ENCODE measurements at regions of chr4 and their contacts with region 1.

Region 1: DNA sequence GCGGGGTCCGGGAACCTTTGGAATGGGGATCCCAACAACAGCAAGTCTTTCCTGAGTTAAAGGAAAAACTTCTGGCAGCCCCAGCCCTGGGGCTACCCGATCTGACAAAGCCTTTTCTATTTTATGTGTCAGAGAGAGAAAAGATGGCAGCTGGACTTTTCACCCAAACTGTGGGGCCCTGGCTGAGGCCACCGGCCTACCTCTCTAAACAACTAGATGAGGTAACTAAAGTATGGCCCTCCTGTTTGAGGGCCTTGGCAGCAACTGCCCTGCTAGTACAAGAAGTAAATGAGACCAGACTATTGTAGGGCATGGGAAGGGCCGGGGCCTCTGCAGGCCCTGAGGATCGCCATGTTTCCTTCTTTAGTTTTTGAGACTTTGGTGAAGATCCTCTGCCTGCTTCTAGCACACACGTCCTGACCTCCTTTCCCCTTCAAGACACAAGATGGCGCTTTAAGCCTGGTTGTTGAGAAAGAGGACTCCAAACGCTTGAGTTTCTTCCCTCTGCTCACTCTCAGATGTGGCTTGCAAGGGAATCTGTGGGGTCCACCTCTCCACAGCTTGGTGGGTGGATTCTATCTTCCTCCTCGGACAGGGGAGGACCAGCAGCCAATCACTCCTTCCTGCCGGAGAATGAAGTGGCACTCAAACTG is 18.5 kb upstream of the DRD5 start:
- DNase-seq: peak; percentile 59
- H3K4me3 ChIP-seq: no peak overlapping the region
- H3K27ac ChIP-seq: no peak overlapping the region
- H3K4me1 ChIP-seq: no peaks in the 10 kb centered on the region
- H3K27me3 ChIP-seq: no peaks in the 10 kb centered on the region
- CTCF ChIP-seq: peak; percentile 14; the same call in 1 of the 2 replicates
- EP300 ChIP-seq: no peak
- RAD21 ChIP-seq: peak; percentile 91

Region 2: GRCh38 chr4:9825049-9825448 is 62.1 kb after region 1 on chr4:
- CTCF ChIA-PET with region 1: no interaction called
- POLR2A ChIA-PET with region 1: no interaction called
- DNase-seq: no peak
- H3K4me3 ChIP-seq: no peak overlapping the region
- H3K27ac ChIP-seq: no peak overlapping the region
- H3K4me1 ChIP-seq: no peaks in the 10 kb centered on the region
- H3K27me3 ChIP-seq: no peaks in the 10 kb centered on the region
- CTCF ChIP-seq: no peak
- EP300 ChIP-seq: no peak
- RAD21 ChIP-seq: no peak

Region 3: GRCh38 chr4:9898596-9899305 is 135.8 kb after region 1 on chr4:
- CTCF ChIA-PET with region 1: interaction called, 29 read pairs
- POLR2A ChIA-PET with region 1: no interaction called
- DNase-seq: peak; percentile 50
- H3K4me3 ChIP-seq: no peak overlapping the region
- H3K27ac ChIP-seq: no peak overlapping the region
- H3K4me1 ChIP-seq: no peaks in the 10 kb centered on the region; a peak in 1 of 4 replicates
- H3K27me3 ChIP-seq: no peaks in the 10 kb centered on the region
- CTCF ChIP-seq: no peak
- EP300 ChIP-seq: no peak
- RAD21 ChIP-seq: peak; percentile 63

Region 4: DNA sequence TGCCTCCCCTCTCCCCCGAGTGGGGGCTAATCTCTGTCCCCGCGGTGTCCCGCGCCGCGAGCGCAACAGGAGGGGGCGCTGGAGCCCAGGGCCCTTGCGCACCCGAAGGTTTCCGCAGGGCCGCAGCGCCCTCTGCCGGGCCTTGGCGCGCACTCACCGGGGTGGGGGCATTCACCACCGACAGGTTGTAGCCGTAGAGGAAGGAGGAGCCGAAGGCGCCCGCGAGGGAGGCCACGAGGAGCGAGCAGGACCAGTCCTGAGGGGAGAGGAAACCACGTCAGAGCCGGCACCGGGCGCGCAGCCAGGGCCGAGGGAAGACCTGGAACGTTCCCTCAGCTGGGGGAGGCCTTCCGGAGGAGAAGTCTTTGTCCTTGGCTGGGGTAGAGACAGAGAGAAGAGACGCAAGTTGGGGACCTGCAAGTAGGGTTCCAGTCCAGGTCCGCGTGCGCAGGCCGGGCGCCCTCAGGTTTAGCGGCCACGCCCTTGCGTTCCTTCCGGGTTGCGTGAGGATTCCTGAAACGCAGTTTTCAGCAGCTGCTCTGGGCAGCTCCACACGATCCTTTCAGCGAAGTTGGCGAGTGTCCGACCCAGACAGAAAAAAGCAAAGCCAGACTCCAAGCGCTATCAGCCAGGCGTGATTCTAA is 256.0 kb after region 1 on chr4:
- CTCF ChIA-PET with region 1: interaction called, 205 read pairs
- POLR2A ChIA-PET with region 1: no interaction called
- DNase-seq: peak; percentile 91
- H3K4me3 ChIP-seq: peak overlapping the region in 1 of 2 experiments; percentile 49; a peak in 2 of 4 replicates
- H3K27ac ChIP-seq: no peak overlapping the region
- H3K4me1 ChIP-seq: peaks cover 0 to 11% of the 10 kb centered on the region in 2 experiments; a peak in 1 of 4 replicates
- H3K27me3 ChIP-seq: no peaks in the 10 kb centered on the region
- CTCF ChIP-seq: peak; percentile 43
- EP300 ChIP-seq: no peak
- RAD21 ChIP-seq: peak; percentile 74

Measured in SK-N-SH (cell line).